ENCODE measurements at regions of chr2 and their contacts with region 1.

Region 1: DNA sequence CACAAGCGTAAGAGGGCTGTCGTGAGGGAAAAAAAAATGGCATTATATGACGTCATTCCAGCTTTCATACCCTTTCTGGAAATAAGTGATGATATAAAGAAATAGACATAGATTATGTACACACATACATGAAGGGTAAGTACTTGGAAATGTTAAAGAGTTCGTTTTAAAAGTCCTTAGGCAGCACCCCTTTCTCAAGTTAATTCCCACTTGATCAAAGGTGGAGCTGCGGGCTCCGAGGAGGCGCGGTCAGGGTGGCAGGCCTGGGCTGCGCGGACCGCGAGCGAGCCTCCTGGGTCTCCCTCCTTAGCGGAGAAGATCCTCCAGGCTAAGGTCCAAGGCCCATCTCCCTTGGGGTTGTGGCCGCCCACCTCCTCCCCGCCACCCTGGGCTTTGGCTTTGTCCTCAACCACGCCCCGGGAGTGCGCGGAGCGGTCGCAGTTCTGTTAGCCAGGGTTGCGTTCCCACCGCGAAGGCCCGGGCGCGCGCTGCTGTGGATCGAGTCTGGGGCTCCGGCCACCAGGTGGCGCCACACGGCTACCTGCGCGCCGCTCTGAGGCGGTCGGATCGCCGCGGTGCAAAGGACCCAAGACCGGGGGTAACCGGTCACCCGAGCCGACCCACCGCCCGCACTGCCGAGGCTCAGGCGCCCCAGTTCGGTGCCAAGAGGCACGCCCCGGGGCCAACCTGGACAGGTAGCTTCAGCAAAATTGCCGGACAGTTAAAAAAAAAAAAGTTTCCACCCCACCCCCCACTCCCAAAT is 66.8 kb downstream of the HNRNPLL start:
- DNase-seq: peak; percentile 75
- H3K4me3 ChIP-seq: peak overlapping the region; percentile 34 to 57 (median 52)
- H3K27ac ChIP-seq: no peak overlapping the region
- H3K4me1 ChIP-seq: no peaks in the 10 kb centered on the region
- H3K27me3 ChIP-seq: no peaks in the 10 kb centered on the region
- CTCF ChIP-seq: peak; percentile 94 to 96
- POLR2A ChIP-seq: no peak

Region 2: DNA sequence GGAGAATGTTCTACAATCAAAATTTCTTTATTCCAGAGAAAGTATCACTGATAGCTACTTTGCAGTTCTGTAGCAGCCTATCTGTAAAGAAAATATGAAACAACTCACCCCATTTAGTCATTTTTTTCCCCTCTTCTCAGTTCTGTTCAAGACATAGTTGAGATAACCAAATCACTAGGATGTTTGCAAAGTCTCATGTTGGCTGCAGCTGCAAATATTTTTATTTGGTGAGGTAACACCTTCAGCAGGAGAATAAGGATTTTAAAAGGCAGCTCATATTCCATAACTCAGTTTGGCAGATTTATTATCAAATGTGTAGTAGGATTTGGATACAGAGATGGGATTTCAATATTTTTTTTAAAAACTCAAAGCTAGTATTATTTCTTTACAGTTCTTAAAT is 25.8 kb after region 1 on chr2:
- CTCF ChIA-PET with region 1: interaction called, 10 read pairs
- POLR2A ChIA-PET with region 1: no interaction called
- dilution Hi-C with region 1: no loop called
- intact Hi-C with region 1: no loop called
- DNase-seq: no peak
- H3K4me3 ChIP-seq: no peak overlapping the region
- H3K27ac ChIP-seq: no peak overlapping the region
- H3K4me1 ChIP-seq: no peaks in the 10 kb centered on the region
- H3K27me3 ChIP-seq: no peaks in the 10 kb centered on the region
- CTCF ChIP-seq: no peak
- POLR2A ChIP-seq: no peak

Region 3: DNA sequence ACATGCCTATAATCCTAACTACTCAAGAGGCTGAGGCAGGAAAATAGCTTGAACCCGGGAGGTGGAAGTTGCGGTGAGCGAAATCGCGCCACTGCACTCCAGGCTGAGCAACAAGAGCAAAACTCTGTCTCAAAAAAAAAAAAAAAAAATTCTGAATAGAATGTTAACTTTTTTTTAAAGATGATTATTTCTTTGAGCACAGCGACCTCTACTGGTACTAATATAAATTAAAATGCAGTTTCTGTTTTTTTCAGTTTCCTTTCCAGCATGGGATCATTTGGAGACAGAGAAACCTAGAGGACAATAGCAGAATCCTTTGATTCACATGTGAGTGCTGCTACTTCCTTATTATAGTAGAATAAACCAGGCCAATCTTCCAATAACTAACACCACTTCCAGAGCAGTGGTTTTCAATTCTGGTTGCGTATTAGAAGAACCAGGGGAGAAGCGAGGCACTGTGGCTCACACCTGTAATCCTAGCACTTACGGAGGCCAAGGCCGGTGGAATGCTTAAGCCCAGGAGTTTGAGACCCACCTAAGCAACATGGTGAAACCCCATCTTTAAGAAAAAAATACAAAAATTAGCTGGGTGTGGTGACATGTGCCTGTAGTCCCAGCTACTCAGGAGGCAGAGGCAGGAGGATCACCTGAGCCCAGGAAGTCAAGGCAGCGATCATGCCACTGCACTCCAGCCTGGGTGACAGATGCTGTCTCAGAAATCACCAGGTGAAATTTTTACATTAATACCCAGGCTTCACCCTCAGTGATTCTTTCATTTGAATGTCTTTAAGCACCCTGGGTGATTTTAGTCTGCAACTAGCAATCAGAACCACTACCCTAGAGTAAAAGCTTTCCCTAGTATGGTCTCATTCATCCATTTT is 205.2 kb after region 1 on chr2:
- CTCF ChIA-PET with region 1: interaction called, 10 read pairs
- POLR2A ChIA-PET with region 1: interaction called, 4 read pairs
- dilution Hi-C with region 1: no loop called
- intact Hi-C with region 1: loop called (anchors 1 kb)
- DNase-seq: peak; percentile 62
- H3K4me3 ChIP-seq: no peak overlapping the region
- H3K27ac ChIP-seq: no peak overlapping the region
- H3K4me1 ChIP-seq: no peaks in the 10 kb centered on the region
- H3K27me3 ChIP-seq: no peaks in the 10 kb centered on the region
- CTCF ChIP-seq: peak; percentile 12 to 29
- POLR2A ChIP-seq: peak; percentile 13

Region 4: DNA sequence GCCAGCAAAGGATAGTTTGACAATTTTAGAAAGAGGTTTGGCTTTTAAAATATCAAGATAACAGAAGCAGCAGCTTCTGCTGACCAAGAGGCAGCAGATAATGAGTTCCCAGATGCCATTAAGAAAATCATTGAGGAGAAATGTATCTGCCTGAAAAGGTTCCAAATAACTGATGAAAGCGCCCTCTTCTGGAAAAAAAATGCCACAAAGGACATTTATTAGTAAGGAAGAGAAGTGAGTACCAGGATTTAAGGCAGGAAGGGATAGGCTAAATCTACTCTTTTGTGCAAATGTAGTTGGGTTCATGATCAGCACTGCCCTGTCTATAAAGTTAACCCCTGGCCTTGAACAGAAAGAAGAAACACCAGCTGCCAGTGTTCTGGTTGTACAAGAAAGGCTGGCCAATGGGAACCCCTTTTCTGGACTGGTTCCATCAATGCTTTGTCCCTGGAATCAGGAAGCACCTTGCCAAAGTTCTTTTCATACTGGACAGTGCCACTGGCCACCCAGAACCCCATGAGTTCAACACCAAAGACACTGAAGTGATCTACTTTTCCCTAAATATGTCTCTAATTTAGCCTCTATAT is 299.2 kb after region 1 on chr2:
- CTCF ChIA-PET with region 1: no interaction called
- POLR2A ChIA-PET with region 1: no interaction called
- dilution Hi-C with region 1: no loop called
- intact Hi-C with region 1: loop called (anchors 1 kb)
- DNase-seq: peak; percentile 40
- H3K4me3 ChIP-seq: no peak overlapping the region
- H3K27ac ChIP-seq: no peak overlapping the region
- H3K4me1 ChIP-seq: no peaks in the 10 kb centered on the region
- H3K27me3 ChIP-seq: no peaks in the 10 kb centered on the region
- CTCF ChIP-seq: peak; percentile 17 to 35
- POLR2A ChIP-seq: no peak

Measured in endothelial cell of umbilical vein (primary cell).